Activated CD4-positive, alpha-beta memory T cell treated with anti-CD3 and anti-CD28 coated beads, Interleukin-2, amount 10 ng/mL, durations not matched to agents 7 days and 5 days (primary cell): ENCODE measurements at regions of chr9 and their contacts with region 1.

Region 1: GRCh38 chr9:126745574-126746411 is 59.0 kb upstream of the ZBTB43 start:
- DNase-seq: no peak
- H3K4me3 Mint-ChIP-seq: no peak overlapping the region
- H3K27ac Mint-ChIP-seq: no peak overlapping the region
- H3K4me1 Mint-ChIP-seq: peaks cover 30% of the 10 kb centered on the region
- H3K27me3 Mint-ChIP-seq: peaks cover 31% of the 10 kb centered on the region

Region 2: DNA sequence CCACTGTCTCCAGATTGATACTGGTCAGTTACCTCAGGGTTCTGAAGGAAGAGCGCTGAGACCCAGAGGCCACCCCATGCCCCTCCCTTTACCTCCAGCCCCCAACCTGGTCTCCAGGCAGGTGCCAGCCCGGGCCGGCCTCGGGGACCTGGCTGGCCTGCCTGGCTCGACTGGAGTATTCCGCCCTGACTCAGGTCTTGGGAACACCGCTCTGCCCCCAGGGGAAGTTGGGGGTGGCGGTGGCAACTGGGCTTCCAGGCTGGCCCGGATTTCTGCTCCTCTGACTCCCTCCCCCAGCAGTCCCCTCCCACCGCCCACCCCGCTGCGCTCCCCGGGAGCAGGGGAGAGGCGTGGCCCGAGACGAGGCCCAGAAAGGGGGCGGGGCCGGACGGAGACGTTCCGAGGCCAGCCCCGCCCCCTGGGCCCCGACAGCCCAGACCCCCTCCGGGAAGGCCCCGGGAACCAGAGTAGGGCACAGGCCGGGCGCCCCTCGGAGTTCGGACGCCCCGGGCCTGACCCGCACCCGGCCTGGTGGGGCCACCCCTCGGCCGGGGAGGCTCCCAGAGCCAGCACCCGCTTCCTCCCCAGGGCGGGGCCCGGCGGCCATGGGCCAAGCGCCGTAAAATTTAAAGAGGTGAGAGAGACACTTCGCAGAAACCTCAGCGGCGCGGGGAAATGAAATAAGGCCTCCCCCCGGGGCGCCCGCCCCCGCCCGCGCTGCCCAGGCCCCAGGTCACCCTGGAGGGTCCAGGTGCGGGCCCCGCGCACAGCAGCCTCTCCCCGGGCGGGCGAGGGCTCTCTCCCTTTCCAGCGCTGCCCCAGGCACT is 23.3 kb before region 1 on chr9:
- CTCF ChIA-PET with region 1: interaction called, 3 read pairs
- POLR2A ChIA-PET with region 1: interaction called, 12 read pairs
- DNase-seq: peak; percentile 89
- H3K4me3 Mint-ChIP-seq: peak overlapping the region; percentile 89
- H3K27ac Mint-ChIP-seq: peak overlapping the region; percentile 74
- H3K4me1 Mint-ChIP-seq: peaks cover 43% of the 10 kb centered on the region
- H3K27me3 Mint-ChIP-seq: peaks cover 10% of the 10 kb centered on the region